Activated CD4-positive, alpha-beta memory T cell treated with anti-CD3 and anti-CD28 coated beads for 36 hours (primary cell): ENCODE measurements at regions of chr15 and their contacts with region 1.

Region 1: DNA sequence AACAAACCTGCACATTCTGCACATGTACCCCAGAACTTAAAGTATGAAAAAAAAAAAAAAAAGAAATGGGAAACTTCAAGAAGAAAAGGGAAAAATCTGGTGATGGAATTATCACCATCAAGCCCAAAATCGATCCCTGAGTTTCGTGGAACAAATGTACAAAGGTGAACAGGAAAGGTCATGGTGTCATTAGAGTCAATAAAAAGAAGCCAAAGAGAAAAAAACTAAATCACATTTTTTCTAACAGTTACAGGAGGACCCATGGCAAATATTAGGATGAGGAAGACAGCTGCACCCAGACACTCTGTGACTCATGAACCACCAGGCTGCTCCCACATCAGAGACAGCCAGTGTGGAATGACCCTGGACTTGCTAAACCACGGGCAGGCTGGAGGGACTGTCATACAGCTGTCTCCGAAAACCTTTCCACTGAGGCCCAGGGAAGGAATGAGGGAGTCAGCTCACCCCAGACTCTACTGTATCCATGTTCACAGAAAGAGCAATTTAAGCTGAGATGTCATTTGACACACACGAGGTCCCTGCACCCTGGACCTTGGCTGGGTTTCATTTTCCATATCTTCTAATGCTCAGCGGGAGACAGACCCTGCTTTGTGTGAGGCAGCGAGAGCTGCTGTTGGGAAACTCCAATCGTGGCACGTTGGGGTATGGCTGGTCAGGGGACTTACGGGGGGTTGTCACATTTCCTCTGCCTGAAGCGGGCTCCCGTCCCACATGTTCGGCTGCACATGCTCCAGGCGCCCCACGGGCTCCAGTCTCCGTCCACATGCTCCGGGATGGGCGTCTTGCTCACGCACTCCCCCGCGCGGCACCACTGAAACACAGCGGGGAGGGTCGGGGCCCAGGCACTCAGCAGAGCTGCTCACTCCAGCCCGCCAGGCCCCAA is 210.2 kb downstream of the ADAMTS17 start:
- DNase-seq: peak; percentile 67
- H3K4me3 Mint-ChIP-seq: peak overlapping the region; percentile 32
- H3K27ac Mint-ChIP-seq: no peak overlapping the region
- H3K4me1 Mint-ChIP-seq: no peaks in the 10 kb centered on the region
- H3K27me3 Mint-ChIP-seq: no peaks in the 10 kb centered on the region

Region 2: GRCh38 chr15:99961011-99961441 is 170.5 kb before region 1 on chr15:
- CTCF ChIA-PET with region 1: no interaction called
- POLR2A ChIA-PET with region 1: no interaction called
- intact Hi-C with region 1: loop called (anchors 2 kb)
- DNase-seq: peak; percentile 54
- H3K4me3 Mint-ChIP-seq: no peak overlapping the region
- H3K27ac Mint-ChIP-seq: no peak overlapping the region
- H3K4me1 Mint-ChIP-seq: peaks cover 11% of the 10 kb centered on the region
- H3K27me3 Mint-ChIP-seq: peaks cover 16% of the 10 kb centered on the region

Region 3: GRCh38 chr15:100060276-100061255 is 71.0 kb before region 1 on chr15:
- CTCF ChIA-PET with region 1: no interaction called
- POLR2A ChIA-PET with region 1: no interaction called
- intact Hi-C with region 1: no loop called
- DNase-seq: no peak
- H3K4me3 Mint-ChIP-seq: no peak overlapping the region
- H3K27ac Mint-ChIP-seq: no peak overlapping the region
- H3K4me1 Mint-ChIP-seq: no peaks in the 10 kb centered on the region
- H3K27me3 Mint-ChIP-seq: no peaks in the 10 kb centered on the region